Activated CD4-positive, alpha-beta memory T cell treated with anti-CD3 and anti-CD28 coated beads for 36 hours (primary cell): ENCODE measurements at regions of chr17 and their contacts with region 1.

Region 1: GRCh38 chr17:66466840-66467367 is 164.5 kb downstream of the PRKCA start:
- DNase-seq: peak; percentile 88
- H3K4me3 Mint-ChIP-seq: peak overlapping the region; percentile 60
- H3K27ac Mint-ChIP-seq: peak overlapping the region; percentile 91
- H3K4me1 Mint-ChIP-seq: peaks cover 80% of the 10 kb centered on the region
- H3K27me3 Mint-ChIP-seq: no peaks in the 10 kb centered on the region

Region 2: DNA sequence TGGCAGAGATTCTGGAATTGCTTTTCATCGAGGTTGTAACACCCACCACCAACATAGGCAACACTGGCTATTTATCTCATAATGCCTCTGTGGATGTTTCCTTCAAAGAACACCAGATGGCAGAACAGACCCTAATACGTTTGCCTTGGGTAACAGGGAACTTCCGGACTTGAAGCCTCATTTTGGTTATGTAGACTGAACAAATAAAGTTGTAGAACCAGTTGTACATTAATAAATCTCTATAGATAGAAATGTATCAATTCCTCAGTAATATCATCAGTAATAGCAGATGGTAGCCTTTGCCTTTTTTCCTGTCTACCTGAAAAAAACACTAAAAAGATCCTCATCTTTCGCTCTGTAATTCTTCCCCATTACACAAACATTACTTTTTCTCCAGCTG is 211.8 kb before region 1 on chr17:
- CTCF ChIA-PET with region 1: interaction called, 7 read pairs
- POLR2A ChIA-PET with region 1: interaction called, 3 read pairs
- intact Hi-C with region 1: loop called (anchors 5 kb)
- DNase-seq: peak; percentile 28
- H3K4me3 Mint-ChIP-seq: peak overlapping the region; percentile 11
- H3K27ac Mint-ChIP-seq: peak overlapping the region; percentile 24
- H3K4me1 Mint-ChIP-seq: peaks cover 13% of the 10 kb centered on the region
- H3K27me3 Mint-ChIP-seq: no peaks in the 10 kb centered on the region

Region 3: GRCh38 chr17:66373944-66374817 is 92.7 kb before region 1 on chr17:
- CTCF ChIA-PET with region 1: no interaction called
- POLR2A ChIA-PET with region 1: no interaction called
- intact Hi-C with region 1: loop called (anchors 5 kb)
- DNase-seq: peak; percentile 58
- H3K4me3 Mint-ChIP-seq: no peak overlapping the region
- H3K27ac Mint-ChIP-seq: peak overlapping the region; percentile 69
- H3K4me1 Mint-ChIP-seq: peaks cover 70% of the 10 kb centered on the region
- H3K27me3 Mint-ChIP-seq: no peaks in the 10 kb centered on the region

Region 4: GRCh38 chr17:66426397-66427033 is 40.4 kb before region 1 on chr17:
- CTCF ChIA-PET with region 1: no interaction called
- POLR2A ChIA-PET with region 1: no interaction called
- intact Hi-C with region 1: no loop called
- DNase-seq: peak; percentile 58
- H3K4me3 Mint-ChIP-seq: peak overlapping the region; percentile 14
- H3K27ac Mint-ChIP-seq: peak overlapping the region; percentile 64
- H3K4me1 Mint-ChIP-seq: peaks cover 75% of the 10 kb centered on the region
- H3K27me3 Mint-ChIP-seq: no peaks in the 10 kb centered on the region

Region 5: GRCh38 chr17:66437476-66438026 is 29.4 kb before region 1 on chr17:
- CTCF ChIA-PET with region 1: no interaction called
- POLR2A ChIA-PET with region 1: no interaction called
- intact Hi-C with region 1: loop called (anchors 1 kb)
- DNase-seq: peak; percentile 51
- H3K4me3 Mint-ChIP-seq: no peak overlapping the region
- H3K27ac Mint-ChIP-seq: peak overlapping the region; percentile 55
- H3K4me1 Mint-ChIP-seq: peaks cover 29% of the 10 kb centered on the region
- H3K27me3 Mint-ChIP-seq: no peaks in the 10 kb centered on the region

Region 6: DNA sequence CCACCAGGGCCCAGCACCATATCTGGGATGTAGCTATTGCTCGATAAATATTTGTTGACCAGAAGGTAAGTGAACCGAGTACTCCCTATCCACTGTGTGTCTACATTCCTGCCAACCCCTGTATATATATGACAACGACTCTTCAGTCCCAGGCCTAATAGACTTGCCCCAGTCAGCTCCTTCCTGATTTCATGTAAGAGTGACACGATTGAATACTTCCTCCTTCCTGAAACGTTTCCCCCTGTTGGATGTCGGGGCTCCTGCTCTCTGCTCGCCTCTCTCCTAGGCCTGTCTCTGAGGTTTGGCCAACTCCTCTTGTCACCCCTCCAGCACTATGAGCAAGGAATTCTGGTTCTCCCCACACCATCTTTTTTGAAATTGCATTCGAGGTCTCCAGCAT is 14.4 kb after region 1 on chr17:
- CTCF ChIA-PET with region 1: no interaction called
- POLR2A ChIA-PET with region 1: no interaction called
- intact Hi-C with region 1: no loop called
- DNase-seq: no peak
- H3K4me3 Mint-ChIP-seq: no peak overlapping the region
- H3K27ac Mint-ChIP-seq: no peak overlapping the region
- H3K4me1 Mint-ChIP-seq: peaks cover 23% of the 10 kb centered on the region
- H3K27me3 Mint-ChIP-seq: no peaks in the 10 kb centered on the region

Region 7: GRCh38 chr17:66508896-66509843 is 42.3 kb after region 1 on chr17:
- CTCF ChIA-PET with region 1: interaction called, 6 read pairs
- POLR2A ChIA-PET with region 1: interaction called, 10 read pairs
- intact Hi-C with region 1: loop called (anchors 1 kb)
- DNase-seq: peak; percentile 82
- H3K4me3 Mint-ChIP-seq: peak overlapping the region; percentile 54
- H3K27ac Mint-ChIP-seq: peak overlapping the region; percentile 91
- H3K4me1 Mint-ChIP-seq: peaks cover 76% of the 10 kb centered on the region
- H3K27me3 Mint-ChIP-seq: no peaks in the 10 kb centered on the region

Region 8: GRCh38 chr17:66567234-66568170 is 100.6 kb after region 1 on chr17:
- CTCF ChIA-PET with region 1: interaction called, 15 read pairs
- POLR2A ChIA-PET with region 1: no interaction called
- intact Hi-C with region 1: loop called (anchors 1 kb)
- DNase-seq: peak; percentile 87
- H3K4me3 Mint-ChIP-seq: no peak overlapping the region
- H3K27ac Mint-ChIP-seq: no peak overlapping the region
- H3K4me1 Mint-ChIP-seq: peaks cover 40% of the 10 kb centered on the region
- H3K27me3 Mint-ChIP-seq: no peaks in the 10 kb centered on the region

Region 9: GRCh38 chr17:66673668-66674315 is 206.9 kb after region 1 on chr17:
- CTCF ChIA-PET with region 1: interaction called, 3 read pairs
- POLR2A ChIA-PET with region 1: no interaction called
- intact Hi-C with region 1: loop called (anchors 2 kb)
- DNase-seq: peak; percentile 54
- H3K4me3 Mint-ChIP-seq: peak overlapping the region; percentile 27
- H3K27ac Mint-ChIP-seq: peak overlapping the region; percentile 83
- H3K4me1 Mint-ChIP-seq: peaks cover 68% of the 10 kb centered on the region
- H3K27me3 Mint-ChIP-seq: no peaks in the 10 kb centered on the region